ENCODE measurements at regions of chr19 and their contacts with region 1.

Region 1: DNA sequence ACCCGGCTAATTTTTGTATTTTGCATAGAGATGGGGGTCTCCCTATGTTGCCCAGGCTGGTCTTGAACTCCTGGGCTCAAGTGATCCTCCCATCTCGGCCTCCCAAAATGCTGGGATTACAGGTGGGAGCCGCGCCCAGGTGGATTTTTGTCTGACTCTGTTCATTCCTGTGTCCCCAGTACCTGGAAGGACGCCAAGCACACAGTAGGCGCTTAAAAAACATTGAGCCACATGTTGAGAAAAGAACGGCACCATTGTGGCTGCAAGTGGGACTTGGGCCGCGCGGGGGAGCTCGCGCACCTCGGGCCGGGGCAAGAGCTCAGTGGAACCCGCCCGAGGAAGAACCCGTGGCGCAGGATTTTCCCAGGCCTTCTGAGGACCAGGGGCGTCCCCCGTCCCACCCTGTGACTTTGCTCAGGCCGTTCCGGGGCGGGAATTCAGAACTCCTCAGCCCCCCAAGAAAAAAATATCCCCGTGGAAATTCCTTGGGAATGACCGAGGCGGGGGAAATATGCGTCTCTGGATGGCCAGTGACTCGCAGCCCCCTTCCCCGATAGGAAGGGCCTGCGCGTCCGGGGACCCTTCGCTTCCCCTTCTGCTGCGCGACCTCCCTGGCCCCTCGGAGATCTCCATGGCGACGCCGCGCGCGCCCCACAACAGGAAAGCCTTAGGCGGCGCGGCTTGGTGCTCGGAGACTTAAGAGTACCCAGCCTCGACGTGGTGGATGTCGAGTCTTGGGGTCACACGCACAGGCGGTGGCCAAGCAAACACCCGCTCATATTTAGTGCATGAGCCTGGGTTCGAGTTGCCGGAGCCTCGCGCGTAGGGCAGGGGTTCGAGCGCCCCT is 1.4 kb upstream of the ICAM1 start:
- DNase-seq: peak; percentile 91
- H3K4me3 Mint-ChIP-seq: peak overlapping the region; percentile 83
- H3K27ac Mint-ChIP-seq: peak overlapping the region; percentile 93
- H3K4me1 Mint-ChIP-seq: peaks cover 45% of the 10 kb centered on the region
- H3K27me3 Mint-ChIP-seq: peaks cover 1% of the 10 kb centered on the region

Region 2: DNA sequence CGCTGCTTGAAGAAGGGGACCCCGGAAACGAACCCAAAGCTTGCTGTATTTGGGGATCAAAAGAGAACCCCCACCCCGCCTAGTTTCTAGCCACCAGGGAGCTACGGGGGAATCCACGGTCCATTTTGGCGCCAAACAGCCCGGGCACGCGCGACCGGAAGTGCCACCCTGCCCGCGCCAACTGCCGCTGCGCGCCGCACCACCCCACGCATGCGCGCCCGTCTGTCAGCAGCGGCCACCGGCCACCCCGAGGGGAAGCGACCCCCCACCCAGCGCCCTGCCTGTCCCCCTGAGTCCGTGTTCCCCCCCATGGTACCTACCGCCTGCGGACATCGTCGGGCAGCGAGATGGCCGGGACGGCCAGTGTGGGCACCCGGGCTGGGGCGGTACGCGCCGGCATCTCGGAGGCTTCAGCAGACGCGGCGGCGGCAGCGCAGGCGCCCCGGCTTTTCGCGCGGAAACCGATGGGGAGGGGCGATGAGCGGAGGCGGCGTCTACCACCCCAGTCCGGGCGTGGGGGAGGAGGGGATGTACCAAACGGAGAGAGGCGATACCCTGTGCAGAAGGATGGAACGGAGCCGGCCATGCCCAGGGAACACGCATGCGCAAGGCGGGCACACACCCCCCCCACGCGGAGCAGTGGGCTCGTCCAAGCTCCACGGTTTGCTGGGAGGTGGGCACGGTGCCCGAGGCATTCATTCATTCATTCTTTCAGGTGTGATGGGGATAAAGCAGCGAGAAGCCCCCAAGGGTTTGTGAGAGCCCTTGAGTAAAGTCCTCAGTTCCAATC is 74.9 kb before region 1 on chr19 and contains the start of gene DNMT1:
- CTCF ChIA-PET with region 1: no interaction called
- POLR2A ChIA-PET with region 1: interaction called, 13 read pairs
- DNase-seq: peak; percentile 99
- H3K4me3 Mint-ChIP-seq: peak within 1 kb of the TSS; percentile 100
- H3K27ac Mint-ChIP-seq: peak within 1 kb of the TSS; percentile 97
- H3K4me1 Mint-ChIP-seq: peaks cover 60% of the 10 kb centered on the region
- H3K27me3 Mint-ChIP-seq: no peaks in the 10 kb centered on the region
- total RNA-seq, gene DNMT1: 314 to 331 TPM

Region 3: DNA sequence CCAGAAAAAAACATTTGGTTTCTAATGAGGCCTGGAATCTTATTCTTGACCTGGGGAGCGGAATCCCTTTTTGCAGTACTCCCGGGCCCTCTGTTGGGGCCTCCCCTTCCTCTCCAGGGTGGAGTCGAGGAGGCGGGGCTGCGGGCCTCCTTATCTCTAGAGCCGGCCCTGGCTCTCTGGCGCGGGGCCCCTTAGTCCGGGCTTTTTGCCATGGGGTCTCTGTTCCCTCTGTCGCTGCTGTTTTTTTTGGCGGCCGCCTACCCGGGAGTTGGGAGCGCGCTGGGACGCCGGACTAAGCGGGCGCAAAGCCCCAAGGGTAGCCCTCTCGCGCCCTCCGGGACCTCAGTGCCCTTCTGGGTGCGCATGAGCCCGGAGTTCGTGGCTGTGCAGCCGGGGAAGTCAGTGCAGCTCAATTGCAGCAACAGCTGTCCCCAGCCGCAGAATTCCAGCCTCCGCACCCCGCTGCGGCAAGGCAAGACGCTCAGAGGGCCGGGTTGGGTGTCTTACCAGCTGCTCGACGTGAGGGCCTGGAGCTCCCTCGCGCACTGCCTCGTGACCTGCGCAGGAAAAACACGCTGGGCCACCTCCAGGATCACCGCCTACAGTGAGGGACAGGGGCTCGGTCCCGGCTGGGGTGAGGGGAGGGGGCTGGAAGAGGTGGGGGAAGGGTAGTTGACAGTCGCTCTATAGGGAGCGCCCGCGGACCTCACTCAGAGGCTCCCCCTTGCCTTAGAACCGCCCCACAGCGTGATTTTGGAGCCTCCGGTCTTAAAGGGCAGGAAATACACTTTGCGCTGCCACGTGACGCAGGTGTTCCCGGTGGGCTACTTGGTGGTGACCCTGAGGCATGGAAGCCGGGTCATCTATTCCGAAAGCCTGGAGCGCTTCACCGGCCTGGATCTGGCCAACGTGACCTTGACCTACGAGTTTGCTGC is 17.5 kb after region 1 on chr19 and contains the start of gene ICAM4:
- CTCF ChIA-PET with region 1: interaction called, 28 read pairs
- POLR2A ChIA-PET with region 1: interaction called, 105 read pairs
- DNase-seq: peak; percentile 67
- H3K4me3 Mint-ChIP-seq: peak within 1 kb of the TSS; percentile 50
- H3K27ac Mint-ChIP-seq: peak within 1 kb of the TSS; percentile 65
- H3K4me1 Mint-ChIP-seq: peaks cover 72% of the 10 kb centered on the region
- H3K27me3 Mint-ChIP-seq: peaks cover 44% of the 10 kb centered on the region
- total RNA-seq, gene ICAM4: 1.5 to 2.0 TPM

Region 4: GRCh38 chr19:10339380-10339960 is 69.9 kb after region 1 on chr19 and contains the start of gene ICAM3:
- CTCF ChIA-PET with region 1: interaction called, 6 read pairs
- POLR2A ChIA-PET with region 1: interaction called, 36 read pairs
- DNase-seq: peak; percentile 80
- H3K4me3 Mint-ChIP-seq: peak within 1 kb of the TSS; percentile 99
- H3K27ac Mint-ChIP-seq: peak within 1 kb of the TSS; percentile 93
- H3K4me1 Mint-ChIP-seq: peaks cover 38% of the 10 kb centered on the region
- H3K27me3 Mint-ChIP-seq: no peaks in the 10 kb centered on the region
- total RNA-seq, gene ICAM3: 223 to 237 TPM

Region 5: DNA sequence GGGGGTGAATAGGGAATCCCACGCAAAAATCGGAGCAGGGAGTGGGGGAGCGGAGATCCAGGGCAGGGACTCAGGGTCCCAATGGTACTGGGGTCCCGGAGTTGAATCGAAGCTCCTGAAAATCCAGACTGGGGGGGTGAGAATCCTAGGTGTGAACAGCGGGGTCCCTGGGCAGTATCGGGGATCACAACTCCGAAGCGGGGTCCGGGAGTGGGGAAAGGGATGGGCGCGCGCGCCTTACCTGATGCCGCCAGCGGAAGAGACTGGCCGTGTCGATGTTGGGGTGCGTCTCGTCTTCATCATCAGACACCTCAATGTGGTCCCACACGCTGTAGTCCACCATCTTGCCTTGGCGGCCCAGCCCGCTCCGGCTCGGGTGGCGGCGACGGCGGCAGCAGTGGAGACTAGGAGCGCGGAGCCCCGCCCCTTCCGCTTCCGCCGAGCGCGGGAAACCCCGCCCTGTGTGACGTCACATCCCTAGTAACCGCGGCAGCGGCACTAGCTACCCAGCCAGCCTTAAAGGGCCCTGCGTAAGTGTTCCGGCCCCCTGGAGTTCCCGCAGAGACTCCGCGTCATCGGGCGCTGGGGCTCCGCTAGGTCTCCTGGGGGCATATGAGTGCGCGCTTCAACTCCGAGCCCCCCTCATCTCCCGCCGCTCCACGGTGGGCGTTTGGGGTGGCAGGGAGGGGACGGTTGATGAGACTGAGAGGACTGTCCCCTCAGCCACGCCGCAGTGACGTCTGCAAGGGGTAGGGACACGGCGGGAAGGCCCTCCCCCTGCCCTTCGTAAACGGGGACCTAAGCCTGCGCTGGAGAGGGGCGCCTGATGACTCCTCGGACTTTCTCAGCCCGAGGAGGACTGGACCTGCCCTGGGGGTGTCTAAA is 133.8 kb after region 1 on chr19 and contains the start of gene CDC37:
- CTCF ChIA-PET with region 1: interaction called, 15 read pairs
- POLR2A ChIA-PET with region 1: interaction called, 22 read pairs
- DNase-seq: peak; percentile 98
- H3K4me3 Mint-ChIP-seq: peak within 1 kb of the TSS; percentile 83
- H3K27ac Mint-ChIP-seq: peak within 1 kb of the TSS; percentile 95
- H3K4me1 Mint-ChIP-seq: peaks cover 61% of the 10 kb centered on the region
- H3K27me3 Mint-ChIP-seq: no peaks in the 10 kb centered on the region
- total RNA-seq, gene CDC37: 239 to 244 TPM

Region 6: GRCh38 chr19:10431943-10432735 is 162.6 kb after region 1 on chr19:
- CTCF ChIA-PET with region 1: interaction called, 15 read pairs
- POLR2A ChIA-PET with region 1: interaction called, 13 read pairs
- DNase-seq: peak; percentile 69
- H3K4me3 Mint-ChIP-seq: peak overlapping the region; percentile 67
- H3K27ac Mint-ChIP-seq: peak overlapping the region; percentile 73
- H3K4me1 Mint-ChIP-seq: peaks cover 74% of the 10 kb centered on the region
- H3K27me3 Mint-ChIP-seq: peaks cover 17% of the 10 kb centered on the region

Measured in activated CD4-positive, alpha-beta memory T cell treated with anti-CD3 and anti-CD28 coated beads, Interleukin-2, amount 10 ng/mL, durations not matched to agents 7 days and 5 days (primary cell).